ENCODE measurements at regions of chr1 and their contacts with region 1.

Region 1: DNA sequence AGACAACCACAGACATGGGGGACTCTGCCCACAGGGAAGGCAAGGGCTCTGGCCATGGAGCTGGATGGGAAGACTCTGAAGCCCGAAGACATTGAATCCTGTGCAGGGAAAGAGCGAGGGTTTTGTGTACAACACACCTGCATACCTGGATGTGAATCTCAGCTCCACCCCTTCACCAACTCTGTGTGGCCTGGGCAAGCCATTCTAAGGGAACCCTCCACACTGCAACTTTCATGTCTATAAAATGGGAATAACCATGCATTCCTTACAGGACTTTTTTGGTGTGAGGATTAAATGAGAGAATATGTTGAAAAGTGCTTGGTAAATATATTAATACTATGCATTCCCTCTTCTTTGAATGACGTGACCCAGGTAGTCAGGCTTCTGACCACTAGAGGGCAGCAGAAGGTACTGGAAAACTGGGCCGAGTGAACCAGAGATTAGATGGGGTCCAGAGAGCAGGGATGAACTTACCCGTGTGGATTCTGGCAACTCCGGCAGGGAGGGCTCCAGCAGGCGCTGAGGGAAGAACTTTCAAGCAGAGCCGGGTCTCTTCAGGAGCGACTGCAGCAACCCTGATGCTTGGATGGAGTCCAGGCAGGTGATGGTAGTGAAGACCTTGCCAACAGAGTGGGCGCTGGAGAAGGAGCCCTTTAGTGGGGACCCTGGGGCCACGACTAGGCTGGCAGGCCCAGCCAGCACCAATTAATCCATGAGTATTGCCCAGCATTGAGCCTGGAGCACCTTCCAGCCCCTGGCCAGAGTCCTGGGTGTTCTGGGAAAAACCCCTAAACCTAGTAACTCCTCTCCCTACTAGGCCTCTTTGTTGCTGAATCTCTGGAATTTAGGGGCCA is 834 bp upstream of the ELF3 start:
- DNase-seq: no peak

Region 2: GRCh38 chr1:202122639-202123335 is 113.2 kb after region 1 on chr1 and contains the start of gene GPR37L1:
- intact Hi-C with region 1: loop called (anchors 1 kb)
- DNase-seq: peak; percentile 81
- total RNA-seq, gene GPR37L1: not detected

Region 3: GRCh38 chr1:202135221-202135721 is 125.7 kb after region 1 on chr1:
- intact Hi-C with region 1: loop called (anchors 5 kb)
- DNase-seq: peak; percentile 80

Region 4: GRCh38 chr1:202329891-202330290 is 320.3 kb after region 1 on chr1:
- intact Hi-C with region 1: no loop called
- DNase-seq: no peak